ENCODE measurements at regions of chr3 and their contacts with region 1.

Region 1: DNA sequence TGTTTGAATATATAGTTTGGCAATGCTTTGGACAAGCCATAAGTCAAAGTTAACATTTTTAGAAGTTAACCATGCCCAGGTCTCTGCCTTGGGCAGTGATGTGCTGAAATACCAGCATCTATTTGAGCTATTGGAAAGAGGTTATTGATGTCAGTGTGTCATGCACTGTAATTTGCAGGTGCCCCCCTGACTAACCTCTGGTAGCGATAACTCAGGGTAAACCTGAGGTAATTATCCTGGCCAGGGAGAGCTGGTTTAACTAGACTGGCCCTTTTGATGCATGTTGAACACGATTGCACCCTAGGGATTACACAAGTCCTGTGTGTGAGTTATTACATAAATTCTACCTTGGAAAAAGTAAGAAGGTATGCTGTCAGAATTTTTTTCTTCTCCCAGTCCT is 455.8 kb upstream of the WNT5A start:
- DNase-seq: no peak
- H3K4me3 ChIP-seq: no peak overlapping the region
- H3K27ac ChIP-seq: no peak overlapping the region
- H3K4me1 ChIP-seq: no peaks in the 10 kb centered on the region
- H3K27me3 ChIP-seq: no peaks in the 10 kb centered on the region
- CTCF ChIP-seq: no peak
- EP300 ChIP-seq: no peak
- POLR2A ChIP-seq: no peak

Region 2: DNA sequence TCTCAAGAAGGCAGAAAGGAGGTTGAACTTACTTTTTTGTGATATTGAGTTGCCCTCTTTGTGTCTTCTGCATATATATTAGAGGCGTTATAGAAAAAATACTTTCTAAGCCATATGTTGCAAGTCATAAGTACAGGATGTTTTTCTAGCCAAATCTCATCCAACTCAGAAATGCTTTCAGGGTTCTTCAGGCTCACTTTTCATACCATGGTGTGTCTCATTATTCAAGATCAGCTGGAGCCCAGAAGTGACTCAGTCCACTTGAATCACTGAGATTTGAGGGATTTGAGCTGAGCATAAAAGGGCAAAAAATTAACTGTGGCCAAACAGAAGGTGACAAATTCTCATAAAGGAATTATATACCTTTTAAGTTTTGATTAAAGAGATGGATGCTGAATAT is 613.0 kb before region 1 on chr3:
- intact Hi-C with region 1: loop called in 1 of 4 experiments (anchors 5 kb)
- DNase-seq: no peak
- H3K4me3 ChIP-seq: no peak overlapping the region
- H3K27ac ChIP-seq: no peak overlapping the region
- H3K4me1 ChIP-seq: no peaks in the 10 kb centered on the region
- H3K27me3 ChIP-seq: no peaks in the 10 kb centered on the region
- CTCF ChIP-seq: no peak
- EP300 ChIP-seq: no peak
- POLR2A ChIP-seq: no peak

Region 3: GRCh38 chr3:56783644-56784447 is 841.0 kb after region 1 on chr3:
- intact Hi-C with region 1: no loop called
- DNase-seq: peak in 2 of 5 donors; percentile 38 to 47
- H3K4me3 ChIP-seq: no peak overlapping the region
- H3K27ac ChIP-seq: peak overlapping the region in 1 of 2 donors; percentile 8
- H3K4me1 ChIP-seq: peaks cover 13% of the 10 kb centered on the region
- H3K27me3 ChIP-seq: no peaks in the 10 kb centered on the region
- CTCF ChIP-seq: no peak
- EP300 ChIP-seq: no peak
- POLR2A ChIP-seq: no peak

Measured in ovary (tissue), 10 donors.